Natural killer cell (primary cell): ENCODE measurements at regions of chr6 and their contacts with region 1.

Region 1: GRCh38 chr6:161228921-161229591 is 44.8 kb downstream of the AGPAT4 start:
- DNase-seq: no peak
- ATAC-seq: no peak
- H3K4me3 ChIP-seq: no peak overlapping the region
- H3K4me3 Mint-ChIP-seq: peak overlapping the region; percentile 49
- H3K27ac ChIP-seq: no peak overlapping the region
- H3K27ac Mint-ChIP-seq: peak overlapping the region; percentile 24 to 87
- H3K4me1 ChIP-seq: peaks cover 49% of the 10 kb centered on the region
- H3K4me1 Mint-ChIP-seq: peaks cover 49 to 61% of the 10 kb centered on the region in 2 donors
- H3K27me3 ChIP-seq: no peaks in the 10 kb centered on the region
- H3K27me3 Mint-ChIP-seq: peaks cover 5 to 6% of the 10 kb centered on the region in 2 donors
- CTCF ChIP-seq: no peak

Region 2: DNA sequence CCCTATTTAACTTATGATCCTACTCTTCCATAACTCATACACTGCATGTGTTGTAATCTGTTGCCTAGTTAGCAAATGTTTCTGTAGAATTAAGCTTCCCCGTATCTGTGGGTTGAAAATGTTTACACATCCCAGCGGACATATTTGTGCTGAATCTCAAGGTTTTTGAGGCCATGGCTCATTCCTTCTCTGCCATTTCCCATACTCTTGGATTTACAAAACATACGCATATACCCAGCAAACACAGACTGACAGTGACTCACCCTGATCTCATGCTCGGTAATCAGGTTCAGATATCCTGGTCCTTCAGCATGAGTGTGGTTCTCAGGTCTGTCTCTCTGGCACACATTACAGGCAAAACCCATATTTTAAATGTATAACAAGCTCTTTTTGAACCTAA is 13.9 kb before region 1 on chr6:
- intact Hi-C with region 1: no loop called
- DNase-seq: no peak
- ATAC-seq: no peak
- H3K4me3 ChIP-seq: no peak overlapping the region
- H3K4me3 Mint-ChIP-seq: no peak overlapping the region
- H3K27ac ChIP-seq: no peak overlapping the region
- H3K27ac Mint-ChIP-seq: no peak overlapping the region
- H3K4me1 ChIP-seq: no peaks in the 10 kb centered on the region
- H3K4me1 Mint-ChIP-seq: peaks cover 0 to 26% of the 10 kb centered on the region in 2 donors
- H3K27me3 ChIP-seq: no peaks in the 10 kb centered on the region
- H3K27me3 Mint-ChIP-seq: no peaks in the 10 kb centered on the region
- CTCF ChIP-seq: no peak

Region 3: DNA sequence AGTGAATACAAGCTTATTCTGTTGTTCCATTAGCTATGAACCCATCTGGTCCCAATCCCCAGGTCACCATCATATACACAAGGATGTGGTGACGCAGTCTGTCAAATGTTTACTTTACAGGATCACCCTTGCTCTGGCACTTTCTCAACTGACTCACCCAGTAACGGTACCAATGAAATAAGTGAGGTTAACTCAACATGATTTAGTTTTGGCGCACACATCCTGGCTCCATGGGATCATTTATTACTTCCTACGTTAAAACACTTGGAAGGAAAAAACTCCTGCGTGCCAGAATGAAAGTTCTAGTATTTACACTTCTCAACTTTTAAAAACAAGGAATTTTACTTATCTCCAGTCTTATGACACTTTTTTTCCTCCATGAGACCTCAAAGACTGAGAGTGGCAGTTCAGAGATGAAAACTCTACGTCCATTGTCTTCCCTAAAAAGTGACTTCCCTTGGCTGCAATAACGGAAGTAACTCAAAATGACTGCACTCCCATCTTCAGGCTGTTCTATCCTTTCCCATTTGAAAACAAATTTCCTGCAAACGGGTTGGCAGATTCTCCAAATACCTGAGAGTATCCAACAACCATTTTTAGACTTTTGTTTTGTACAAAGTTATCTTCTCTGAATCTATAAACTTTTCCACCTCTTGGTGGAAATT is 28.9 kb after region 1 on chr6:
- intact Hi-C with region 1: loop called (anchors 1 kb)
- DNase-seq: no peak
- ATAC-seq: no peak
- H3K4me3 ChIP-seq: no peak overlapping the region
- H3K4me3 Mint-ChIP-seq: no peak overlapping the region
- H3K27ac ChIP-seq: no peak overlapping the region
- H3K27ac Mint-ChIP-seq: peak overlapping the region; percentile 64
- H3K4me1 ChIP-seq: peaks cover 19% of the 10 kb centered on the region
- H3K4me1 Mint-ChIP-seq: peaks cover 52 to 59% of the 10 kb centered on the region in 2 donors
- H3K27me3 ChIP-seq: no peaks in the 10 kb centered on the region
- H3K27me3 Mint-ChIP-seq: peaks cover 4 to 34% of the 10 kb centered on the region in 2 donors
- CTCF ChIP-seq: no peak

Region 4: DNA sequence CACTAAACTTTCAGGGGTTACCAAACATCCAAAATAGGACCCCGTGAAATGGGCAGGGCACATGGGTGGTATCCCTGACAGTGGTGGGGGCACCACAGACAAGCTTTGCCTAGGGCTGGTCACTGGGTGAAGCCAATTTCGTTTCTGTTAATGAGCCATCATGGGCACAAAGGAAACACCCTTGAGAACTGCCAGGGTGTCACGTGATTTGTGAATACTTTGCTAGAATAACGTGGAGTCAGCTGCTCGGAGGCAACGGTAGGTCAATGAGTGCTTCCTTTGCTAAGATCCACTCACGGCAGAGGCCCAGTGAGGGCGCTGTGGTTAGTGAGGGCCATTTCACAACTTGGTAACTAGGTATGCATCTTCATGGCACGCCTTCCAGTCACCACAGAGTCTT is 132.5 kb after region 1 on chr6:
- intact Hi-C with region 1: no loop called
- DNase-seq: no peak
- ATAC-seq: peak in 2 of 3 donors; percentile 39 to 40
- H3K4me3 ChIP-seq: no peak overlapping the region
- H3K4me3 Mint-ChIP-seq: no peak overlapping the region
- H3K27ac ChIP-seq: no peak overlapping the region
- H3K27ac Mint-ChIP-seq: no peak overlapping the region
- H3K4me1 ChIP-seq: peaks cover 8% of the 10 kb centered on the region
- H3K4me1 Mint-ChIP-seq: peaks cover 4 to 14% of the 10 kb centered on the region in 2 donors
- H3K27me3 ChIP-seq: no peaks in the 10 kb centered on the region
- H3K27me3 Mint-ChIP-seq: peaks cover 2 to 18% of the 10 kb centered on the region in 2 donors
- CTCF ChIP-seq: no peak